ENCODE measurements at regions of chr5 and their contacts with region 1.

Region 1: DNA sequence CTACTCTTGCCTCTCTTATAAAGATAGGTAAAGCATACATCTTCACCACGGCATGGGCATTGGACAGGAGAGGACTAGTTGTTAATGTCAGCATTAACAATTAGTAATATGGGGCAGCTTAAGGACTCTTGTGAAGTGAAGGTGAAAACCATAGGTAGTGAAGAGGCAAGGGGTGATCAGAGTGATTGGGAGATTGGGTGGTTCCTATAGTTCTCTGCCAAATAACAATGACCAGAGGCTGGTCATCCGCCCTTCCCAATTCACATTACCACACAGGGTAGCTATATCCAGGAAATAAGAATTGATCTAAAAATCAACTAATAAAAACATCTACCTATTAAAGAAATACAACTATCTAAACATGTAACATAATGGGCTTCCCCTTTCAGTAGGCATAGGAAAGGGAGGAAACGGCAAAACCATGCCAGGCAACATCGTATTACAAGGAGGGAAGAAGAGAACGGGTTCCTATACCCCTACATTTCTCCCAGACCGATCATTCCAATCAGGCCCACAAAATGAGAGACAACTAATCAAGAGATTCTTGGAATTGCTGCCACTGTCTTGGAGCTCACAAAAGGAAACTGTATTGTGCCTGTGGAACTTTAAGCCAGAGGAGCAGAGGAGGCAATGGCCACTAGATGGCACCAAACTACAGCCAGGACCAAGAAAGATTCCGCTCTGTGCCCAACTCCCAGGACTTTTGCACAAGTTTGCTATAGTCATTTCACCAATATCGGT is 121.6 kb downstream of the FBXL17 start:
- DNase-seq: peak; percentile 17
- H3K4me3 ChIP-seq: no peak overlapping the region
- CTCF ChIP-seq: peak; percentile 94

Region 2: GRCh38 chr5:108233617-108234155 is 26.6 kb before region 1 on chr5:
- CTCF ChIA-PET with region 1: interaction called, 13 read pairs
- POLR2A ChIA-PET with region 1: no interaction called
- DNase-seq: no peak
- H3K4me3 ChIP-seq: no peak overlapping the region
- CTCF ChIP-seq: no peak

Region 3: DNA sequence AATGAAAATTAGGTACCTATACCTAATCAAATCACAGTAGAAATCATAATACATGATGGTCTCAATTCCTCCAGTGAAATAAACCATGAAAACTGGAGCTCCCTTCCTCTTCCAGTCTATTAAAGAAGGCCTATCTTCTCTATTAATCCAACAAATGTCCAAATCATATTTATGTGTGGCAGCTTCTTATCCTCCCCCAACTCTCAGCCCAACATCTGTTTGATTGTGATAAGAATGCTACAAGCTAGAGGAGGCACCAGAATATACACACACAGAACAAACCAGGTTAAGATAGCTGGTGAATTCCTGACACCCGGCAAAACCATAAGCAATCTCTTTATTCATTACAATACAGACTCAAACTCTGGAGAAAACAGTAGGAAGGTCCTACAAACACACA is 10.8 kb after region 1 on chr5:
- CTCF ChIA-PET with region 1: interaction called, 80 read pairs
- POLR2A ChIA-PET with region 1: no interaction called
- DNase-seq: no peak
- H3K4me3 ChIP-seq: no peak overlapping the region
- CTCF ChIP-seq: no peak

Region 4: DNA sequence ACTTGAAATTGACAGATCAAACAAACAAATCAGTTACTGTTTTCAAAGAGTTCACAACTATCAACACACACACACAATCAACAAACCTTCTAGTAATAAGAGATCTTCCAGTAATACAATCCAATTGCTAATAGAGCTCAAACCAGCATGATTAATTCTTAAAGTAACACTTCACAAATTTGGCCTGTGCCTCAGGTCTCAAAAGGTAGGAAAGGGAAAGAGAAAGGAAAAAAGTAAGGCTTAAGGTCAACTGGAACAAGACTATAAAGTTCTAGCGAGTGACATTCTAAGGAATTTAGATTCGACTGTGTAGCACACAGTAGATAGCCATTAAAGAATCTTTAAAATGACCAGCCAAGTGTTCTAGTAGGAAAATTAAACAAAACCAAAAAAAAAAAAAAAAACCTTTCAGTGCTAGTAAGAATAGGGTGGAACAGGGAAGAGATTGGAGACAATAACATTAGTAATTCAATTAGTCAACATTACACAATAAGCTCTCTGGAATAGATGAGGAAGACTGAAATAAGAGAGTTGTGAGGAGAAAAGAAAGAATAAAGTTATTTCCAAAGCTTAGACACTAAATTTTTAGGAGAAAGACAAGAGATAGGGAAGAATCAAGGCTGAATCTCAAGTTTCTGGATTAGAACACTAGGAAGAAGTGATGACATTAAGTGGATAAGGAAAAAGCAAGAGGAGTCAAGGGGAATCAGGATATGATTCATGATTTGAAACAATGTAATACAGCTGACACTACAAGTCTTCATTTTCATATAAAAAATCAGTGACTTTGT is 35.5 kb after region 1 on chr5:
- CTCF ChIA-PET with region 1: interaction called, 15 read pairs
- POLR2A ChIA-PET with region 1: no interaction called
- DNase-seq: no peak
- H3K4me3 ChIP-seq: no peak overlapping the region
- CTCF ChIP-seq: no peak

Region 5: DNA sequence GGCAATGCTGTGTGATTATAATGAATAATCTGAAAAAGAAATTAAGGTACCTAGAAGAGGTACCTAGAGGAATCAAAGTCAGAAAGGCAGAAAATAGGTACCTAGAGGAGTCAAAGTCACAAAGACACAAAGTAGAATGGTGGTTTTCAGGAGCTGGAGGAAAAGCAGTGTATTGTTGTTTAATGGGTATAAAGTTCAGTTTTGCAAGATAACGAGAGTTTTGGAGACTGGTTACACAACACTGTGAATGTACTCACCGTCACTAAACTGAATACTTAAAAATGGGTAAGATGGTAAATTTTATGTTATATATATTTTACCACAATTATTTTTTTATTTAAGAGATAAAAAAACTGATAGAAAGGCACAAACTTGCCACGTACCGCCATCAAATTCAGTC is 64.6 kb after region 1 on chr5:
- CTCF ChIA-PET with region 1: interaction called, 12 read pairs
- POLR2A ChIA-PET with region 1: no interaction called
- DNase-seq: no peak
- H3K4me3 ChIP-seq: no peak overlapping the region
- CTCF ChIP-seq: no peak

Region 6: DNA sequence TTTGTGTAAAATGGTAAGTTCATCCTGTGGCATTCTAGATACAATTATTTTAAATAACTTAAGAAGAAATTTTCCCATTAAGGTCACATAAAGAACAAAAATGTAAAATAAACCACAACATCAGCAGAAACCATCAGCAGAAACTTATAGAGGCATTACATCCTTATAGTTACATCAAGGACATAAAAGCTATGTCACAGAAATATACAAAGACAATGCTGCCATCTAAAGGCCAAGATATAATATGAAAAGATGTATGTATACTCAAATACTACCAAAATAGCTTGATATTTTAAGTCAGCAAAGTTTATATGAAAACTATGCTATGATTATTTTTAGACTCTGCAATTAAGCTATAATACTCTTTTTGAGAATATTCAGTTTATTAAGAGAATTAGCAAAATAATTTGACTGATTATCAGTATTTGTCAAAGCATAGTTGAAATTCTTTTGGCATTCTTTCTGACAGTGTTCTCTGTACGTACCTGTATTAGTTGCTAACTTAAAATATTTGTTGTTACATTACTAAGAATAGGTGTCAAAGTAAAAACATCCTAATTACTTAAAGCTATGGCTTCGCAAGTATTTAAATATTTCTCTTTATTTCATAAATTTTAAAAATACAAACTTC is 85.4 kb after region 1 on chr5:
- CTCF ChIA-PET with region 1: interaction called, 132 read pairs
- POLR2A ChIA-PET with region 1: no interaction called
- DNase-seq: peak; percentile 7
- H3K4me3 ChIP-seq: no peak overlapping the region
- CTCF ChIP-seq: no peak